ENCODE measurements at regions of chr19 and their contacts with region 1.

Region 1: GRCh38 chr19:49555600-49556411 is 24.6 kb downstream of the NOSIP start:
- DNase-seq: peak; percentile 92
- ATAC-seq: peak; percentile 62
- H3K4me3 Mint-ChIP-seq: peak overlapping the region; percentile 35
- H3K27ac Mint-ChIP-seq: peak overlapping the region; percentile 98
- H3K4me1 Mint-ChIP-seq: peaks cover 82% of the 10 kb centered on the region
- H3K27me3 Mint-ChIP-seq: no peaks in the 10 kb centered on the region

Region 2: GRCh38 chr19:49533551-49534488 is 22.0 kb before region 1 on chr19:
- CTCF ChIA-PET with region 1: interaction called, 10 read pairs
- POLR2A ChIA-PET with region 1: interaction called, 3 read pairs
- intact Hi-C with region 1: loop called in 1 of 2 experiments (anchors 1 kb)
- DNase-seq: peak; percentile 90
- ATAC-seq: peak; percentile 87
- H3K4me3 Mint-ChIP-seq: peak overlapping the region; percentile 78
- H3K27ac Mint-ChIP-seq: peak overlapping the region; percentile 71
- H3K4me1 Mint-ChIP-seq: peaks cover 22% of the 10 kb centered on the region
- H3K27me3 Mint-ChIP-seq: peaks cover 3% of the 10 kb centered on the region

Measured in activated CD4-positive, alpha-beta T cell treated with anti-CD3 and anti-CD28 coated beads for 36 hours (primary cell).